GM12878 (cell line): ENCODE measurements at regions of chr6 and their contacts with region 1.

Region 1: DNA sequence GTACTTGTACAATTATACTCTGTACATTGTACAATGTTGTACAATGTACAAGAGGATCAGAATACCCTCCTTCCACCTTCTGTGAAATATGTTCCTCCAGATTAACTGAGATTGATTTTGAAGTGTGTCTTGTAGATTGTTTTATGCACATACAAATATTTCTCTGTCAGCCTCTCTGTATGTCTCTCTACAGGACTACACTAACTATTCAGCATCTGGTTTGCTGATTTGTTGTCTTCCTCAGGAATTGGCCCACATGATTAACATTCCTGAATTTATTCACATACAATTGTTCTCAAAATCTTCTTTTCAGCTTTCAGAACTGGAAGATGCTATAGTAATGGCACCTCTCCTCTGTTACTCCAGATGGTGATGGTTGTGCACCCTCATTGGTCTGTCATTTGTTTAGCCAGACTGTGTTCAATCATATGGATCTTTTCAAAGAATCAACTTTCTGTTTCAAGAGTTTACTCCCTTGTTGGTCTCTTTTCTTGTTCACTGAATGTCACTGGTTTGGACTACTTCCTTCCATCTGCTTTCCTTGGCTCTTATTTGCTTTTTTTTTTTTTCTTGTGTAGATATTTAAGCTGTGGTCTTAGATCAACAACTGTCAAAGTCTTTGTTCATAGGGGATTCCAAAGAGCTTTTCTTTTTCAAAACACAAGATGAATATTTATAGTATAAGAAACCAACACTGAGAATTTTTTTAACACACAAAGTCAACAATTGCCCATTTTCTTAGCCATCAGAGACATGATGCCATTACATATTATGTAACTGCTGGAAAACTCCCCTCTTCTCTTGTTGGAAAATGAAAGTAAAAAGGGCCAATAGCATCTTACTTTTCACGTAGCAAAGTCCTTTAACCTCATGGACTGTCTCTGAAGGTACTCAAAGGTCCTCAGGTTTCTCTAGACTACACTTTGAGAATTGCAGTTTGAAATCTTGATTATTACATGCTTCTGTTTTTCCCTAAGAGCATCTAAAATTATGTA is 67.9 kb downstream of the LPA start:
- DNase-seq: no peak
- ATAC-seq: no peak
- H3K4me3 ChIP-seq: no peak overlapping the region
- H3K27ac ChIP-seq: no peak overlapping the region
- H3K4me1 ChIP-seq: no peaks in the 10 kb centered on the region
- H3K27me3 ChIP-seq: no peaks in the 10 kb centered on the region
- CTCF ChIP-seq: no peak
- EP300 ChIP-seq: no peak
- POLR2A ChIP-seq: no peak
- RAD21 ChIP-seq: no peak

Region 2: GRCh38 chr6:160679402-160679769 is 83.3 kb after region 1 on chr6:
- CTCF ChIA-PET with region 1: no interaction called
- POLR2A ChIA-PET with region 1: no interaction called
- RAD21 ChIA-PET with region 1: no interaction called
- SMC1A ChIA-PET with region 1: no interaction called
- in situ Hi-C with region 1: no loop called
- intact Hi-C with region 1: loop called (anchors 10 kb)
- DNase-seq: no peak
- ATAC-seq: no peak
- H3K4me3 ChIP-seq: no peak overlapping the region
- H3K27ac ChIP-seq: no peak overlapping the region
- H3K4me1 ChIP-seq: no peaks in the 10 kb centered on the region
- H3K27me3 ChIP-seq: no peaks in the 10 kb centered on the region
- CTCF ChIP-seq: 0 out of 6 replicates have a peak, but pooled peaks of 1 of the 3 experiments have one; percentile 6
- EP300 ChIP-seq: no peak
- POLR2A ChIP-seq: no peak
- RAD21 ChIP-seq: no peak

Region 3: DNA sequence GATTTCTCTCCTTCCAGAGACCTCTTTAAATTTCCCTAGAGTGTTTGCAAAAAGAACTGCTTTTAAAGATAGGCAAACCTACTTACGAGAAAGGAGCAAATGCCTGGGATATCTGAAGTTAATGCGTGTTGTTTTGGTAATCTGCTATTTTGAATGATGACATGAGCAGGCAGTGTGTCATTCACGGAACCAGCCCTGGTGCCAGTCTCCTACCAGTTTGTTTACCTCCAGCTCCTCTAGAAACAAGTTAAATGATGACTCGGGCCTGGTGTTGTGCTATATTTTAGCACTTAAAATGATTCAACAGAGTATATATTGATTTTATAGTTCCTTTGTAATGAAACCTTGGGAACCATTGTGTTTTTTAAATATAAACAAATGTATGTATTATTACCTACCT is 354.4 kb after region 1 on chr6:
- CTCF ChIA-PET with region 1: no interaction called
- POLR2A ChIA-PET with region 1: no interaction called
- RAD21 ChIA-PET with region 1: no interaction called
- SMC1A ChIA-PET with region 1: no interaction called
- in situ Hi-C with region 1: no loop called
- intact Hi-C with region 1: no loop called
- DNase-seq: no peak
- ATAC-seq: no peak
- H3K4me3 ChIP-seq: no peak overlapping the region
- H3K27ac ChIP-seq: no peak overlapping the region
- H3K4me1 ChIP-seq: no peaks in the 10 kb centered on the region
- H3K27me3 ChIP-seq: no peaks in the 10 kb centered on the region
- CTCF ChIP-seq: no peak
- EP300 ChIP-seq: no peak
- POLR2A ChIP-seq: no peak
- RAD21 ChIP-seq: no peak

Region 4: DNA sequence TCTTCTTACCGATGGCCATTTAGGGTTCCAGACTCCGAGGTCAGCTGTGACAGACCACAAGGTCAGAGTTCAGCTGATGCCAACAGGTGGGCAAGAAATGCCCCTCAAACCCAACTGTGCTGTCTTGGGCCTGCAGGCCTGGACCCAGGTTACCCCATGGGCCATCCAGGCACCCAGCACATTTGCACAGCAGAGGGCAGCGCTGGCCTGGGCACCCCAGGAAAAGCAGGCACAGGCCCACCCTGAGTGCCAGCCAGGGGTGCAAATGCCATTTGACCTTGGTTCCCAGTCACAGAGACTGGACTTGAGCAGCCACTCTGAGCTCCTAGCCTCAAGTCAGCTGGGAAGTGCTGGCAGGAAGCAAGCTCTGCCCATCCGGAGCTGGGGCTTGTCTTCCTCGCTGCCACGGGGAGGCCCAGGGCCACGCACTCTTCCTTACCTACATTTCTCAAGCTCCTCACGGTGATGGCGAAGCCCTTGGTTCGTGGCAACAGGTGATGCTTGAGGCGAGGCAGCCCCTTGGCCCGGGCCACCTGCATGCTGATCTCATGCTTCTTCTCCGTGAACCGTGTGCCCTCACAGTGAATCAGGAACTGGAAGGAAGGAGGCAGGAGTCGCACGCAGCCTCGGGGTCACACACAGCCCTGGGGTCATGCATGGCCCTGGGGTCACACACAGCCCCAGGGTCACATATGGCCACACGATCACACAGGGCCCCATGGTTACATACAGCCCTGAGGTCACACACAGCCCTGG is 557.0 kb after region 1 on chr6:
- CTCF ChIA-PET with region 1: no interaction called
- POLR2A ChIA-PET with region 1: no interaction called
- RAD21 ChIA-PET with region 1: no interaction called
- SMC1A ChIA-PET with region 1: no interaction called
- in situ Hi-C with region 1: no loop called
- intact Hi-C with region 1: no loop called
- DNase-seq: no peak
- ATAC-seq: peak; percentile 28; the same call in 1 of the 3 replicates
- H3K4me3 ChIP-seq: no peak overlapping the region
- H3K27ac ChIP-seq: no peak overlapping the region
- H3K4me1 ChIP-seq: no peaks in the 10 kb centered on the region
- H3K27me3 ChIP-seq: no peaks in the 10 kb centered on the region
- CTCF ChIP-seq: peak in 1 of 3 experiments; percentile 23; a peak in 2 of 6 replicates
- EP300 ChIP-seq: no peak
- POLR2A ChIP-seq: no peak
- RAD21 ChIP-seq: peak; percentile 64